ENCODE measurements at regions of chr1 and their contacts with region 1.

Region 1: GRCh38 chr1:77170687-77171086 is 48.5 kb downstream of the PIGK start:
- DNase-seq: no peak
- H3K4me3 ChIP-seq: no peak overlapping the region
- H3K4me1 ChIP-seq: no peaks in the 10 kb centered on the region
- H3K27me3 ChIP-seq: no peaks in the 10 kb centered on the region

Region 2: GRCh38 chr1:78114034-78114956 is 943.6 kb after region 1 on chr1:
- in situ Hi-C with region 1: loop called (anchors 25 kb)
- DNase-seq: peak; percentile 73 to 74
- H3K4me3 ChIP-seq: no peak overlapping the region
- H3K4me1 ChIP-seq: no peaks in the 10 kb centered on the region
- H3K27me3 ChIP-seq: no peaks in the 10 kb centered on the region

Measured in HAP-1 (cell line).